A673 (cell line): ENCODE measurements at regions of chr12 and their contacts with region 1.

Region 1: DNA sequence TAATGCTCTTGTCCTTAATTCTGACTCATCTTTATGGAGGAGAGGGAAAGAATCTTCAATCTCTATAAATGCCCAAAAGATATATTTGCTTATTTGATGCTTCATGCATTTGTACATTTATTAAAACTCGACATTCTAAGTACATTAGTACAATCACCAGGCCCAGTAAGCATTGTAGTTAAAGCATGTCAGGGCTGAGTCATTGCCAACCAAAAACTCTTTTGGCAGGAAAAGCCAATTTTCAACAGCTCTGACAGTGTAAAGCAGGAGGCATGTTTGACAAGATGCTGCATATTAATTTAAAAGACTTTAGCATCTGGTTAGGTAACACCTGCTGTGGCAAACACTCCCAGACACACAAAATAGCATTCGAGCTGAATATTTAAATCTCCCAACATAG is 290.9 kb downstream of the PPFIA2 start:
- DNase-seq: peak; percentile 79
- H3K4me3 ChIP-seq: no peak overlapping the region
- H3K27ac ChIP-seq: peak overlapping the region; percentile 38
- H3K4me1 ChIP-seq: peaks cover 16% of the 10 kb centered on the region
- H3K27me3 ChIP-seq: no peaks in the 10 kb centered on the region
- CTCF ChIP-seq: no peak

Region 2: DNA sequence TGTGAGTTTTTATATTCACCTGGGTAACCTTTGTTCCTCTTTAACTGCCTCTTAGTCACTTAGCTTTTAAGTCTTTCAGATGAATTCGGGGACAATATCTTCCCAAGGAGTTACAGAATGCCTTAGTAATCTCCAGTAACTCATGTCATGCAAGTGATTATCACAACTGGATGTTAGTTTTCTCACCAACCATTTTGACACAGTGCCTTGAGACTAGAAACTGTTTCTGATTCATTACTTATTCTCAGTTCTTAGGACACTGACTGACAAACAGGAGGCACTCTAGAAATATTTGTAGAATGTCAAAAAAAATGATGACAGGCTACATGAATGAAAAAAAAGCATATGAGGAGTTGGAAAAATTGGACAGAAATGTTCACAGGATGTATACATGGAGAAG is 55.3 kb before region 1 on chr12:
- CTCF ChIA-PET with region 1: no interaction called
- POLR2A ChIA-PET with region 1: no interaction called
- intact Hi-C with region 1: no loop called
- DNase-seq: no peak
- H3K4me3 ChIP-seq: no peak overlapping the region
- H3K27ac ChIP-seq: no peak overlapping the region
- H3K4me1 ChIP-seq: no peaks in the 10 kb centered on the region
- H3K27me3 ChIP-seq: no peaks in the 10 kb centered on the region
- CTCF ChIP-seq: no peak

Region 3: GRCh38 chr12:81502912-81503695 is 34.9 kb after region 1 on chr12:
- CTCF ChIA-PET with region 1: no interaction called
- POLR2A ChIA-PET with region 1: interaction called, 13 read pairs
- intact Hi-C with region 1: no loop called
- DNase-seq: no peak
- H3K4me3 ChIP-seq: no peak overlapping the region
- H3K27ac ChIP-seq: no peak overlapping the region
- H3K4me1 ChIP-seq: no peaks in the 10 kb centered on the region
- H3K27me3 ChIP-seq: no peaks in the 10 kb centered on the region
- CTCF ChIP-seq: no peak